ENCODE measurements at regions of chr1 and their contacts with region 1.

Region 1: DNA sequence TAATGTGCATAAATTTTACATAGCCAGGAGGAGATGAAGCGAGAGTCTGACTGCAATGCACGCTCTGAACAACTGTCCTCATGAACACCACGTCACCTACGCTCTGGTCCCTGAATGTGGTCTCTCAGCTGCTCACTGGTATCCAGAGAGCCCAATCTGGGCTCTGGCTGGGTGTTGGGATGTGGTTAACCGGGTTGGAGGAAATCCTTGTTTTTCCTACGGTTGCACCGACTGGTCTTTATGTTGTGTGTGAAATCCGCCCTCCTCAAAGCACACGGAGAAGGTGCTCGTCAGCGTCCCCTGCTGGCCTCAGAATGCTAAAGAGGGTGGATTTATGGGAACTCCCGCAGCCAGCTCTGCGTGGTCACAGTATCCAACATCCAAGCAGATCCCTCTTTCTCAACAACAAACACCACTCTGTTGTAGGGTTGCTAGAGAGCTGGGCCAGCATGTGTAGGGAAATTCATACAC is 51.8 kb upstream of the FAM89A start:
- DNase-seq: peak; percentile 61
- H3K4me3 ChIP-seq: no peak overlapping the region
- H3K27ac ChIP-seq: no peak overlapping the region
- H3K4me1 ChIP-seq: no peaks in the 10 kb centered on the region
- H3K27me3 ChIP-seq: peaks cover 7 to 13% of the 10 kb centered on the region in 2 experiments
- CTCF ChIP-seq: peak; percentile 71 to 73
- POLR2A ChIP-seq: no peak

Region 2: GRCh38 chr1:230642263-230642959 is 449.5 kb before region 1 on chr1 and contains the start of gene COG2:
- CTCF ChIA-PET with region 1: no interaction called
- POLR2A ChIA-PET with region 1: no interaction called
- dilution Hi-C with region 1: no loop called
- intact Hi-C with region 1: loop called (anchors 5 kb)
- DNase-seq: peak; percentile 94
- H3K4me3 ChIP-seq: peak within 1 kb of the TSS; percentile 4 to 95 (median 47)
- H3K27ac ChIP-seq: no peak within 1 kb of the TSS
- H3K4me1 ChIP-seq: peaks cover 12% of the 10 kb centered on the region
- H3K27me3 ChIP-seq: peaks cover 6 to 8% of the 10 kb centered on the region in 2 experiments
- CTCF ChIP-seq: peak; percentile 100
- POLR2A ChIP-seq: peak; percentile 65
- total RNA-seq, gene COG2: 20.7 and 24.2 TPM in 2 replicates

Region 3: GRCh38 chr1:230917284-230918135 is 174.4 kb before region 1 on chr1:
- CTCF ChIA-PET with region 1: interaction called, 16 read pairs
- POLR2A ChIA-PET with region 1: no interaction called
- dilution Hi-C with region 1: no loop called
- intact Hi-C with region 1: loop called (anchors 1 kb)
- DNase-seq: peak; percentile 72
- H3K4me3 ChIP-seq: no peak overlapping the region
- H3K27ac ChIP-seq: no peak overlapping the region
- H3K4me1 ChIP-seq: no peaks in the 10 kb centered on the region
- H3K27me3 ChIP-seq: no peaks in the 10 kb centered on the region
- CTCF ChIP-seq: peak; percentile 73 to 77
- POLR2A ChIP-seq: no peak

Region 4: GRCh38 chr1:231020139-231020601 is 71.7 kb before region 1 on chr1:
- CTCF ChIA-PET with region 1: interaction called, 11 read pairs
- POLR2A ChIA-PET with region 1: no interaction called
- dilution Hi-C with region 1: no loop called
- intact Hi-C with region 1: loop called (anchors 2 kb)
- DNase-seq: no peak
- H3K4me3 ChIP-seq: no peak overlapping the region
- H3K27ac ChIP-seq: no peak overlapping the region
- H3K4me1 ChIP-seq: peaks cover 7% of the 10 kb centered on the region
- H3K27me3 ChIP-seq: no peaks in the 10 kb centered on the region
- CTCF ChIP-seq: no peak
- POLR2A ChIP-seq: no peak

Region 5: DNA sequence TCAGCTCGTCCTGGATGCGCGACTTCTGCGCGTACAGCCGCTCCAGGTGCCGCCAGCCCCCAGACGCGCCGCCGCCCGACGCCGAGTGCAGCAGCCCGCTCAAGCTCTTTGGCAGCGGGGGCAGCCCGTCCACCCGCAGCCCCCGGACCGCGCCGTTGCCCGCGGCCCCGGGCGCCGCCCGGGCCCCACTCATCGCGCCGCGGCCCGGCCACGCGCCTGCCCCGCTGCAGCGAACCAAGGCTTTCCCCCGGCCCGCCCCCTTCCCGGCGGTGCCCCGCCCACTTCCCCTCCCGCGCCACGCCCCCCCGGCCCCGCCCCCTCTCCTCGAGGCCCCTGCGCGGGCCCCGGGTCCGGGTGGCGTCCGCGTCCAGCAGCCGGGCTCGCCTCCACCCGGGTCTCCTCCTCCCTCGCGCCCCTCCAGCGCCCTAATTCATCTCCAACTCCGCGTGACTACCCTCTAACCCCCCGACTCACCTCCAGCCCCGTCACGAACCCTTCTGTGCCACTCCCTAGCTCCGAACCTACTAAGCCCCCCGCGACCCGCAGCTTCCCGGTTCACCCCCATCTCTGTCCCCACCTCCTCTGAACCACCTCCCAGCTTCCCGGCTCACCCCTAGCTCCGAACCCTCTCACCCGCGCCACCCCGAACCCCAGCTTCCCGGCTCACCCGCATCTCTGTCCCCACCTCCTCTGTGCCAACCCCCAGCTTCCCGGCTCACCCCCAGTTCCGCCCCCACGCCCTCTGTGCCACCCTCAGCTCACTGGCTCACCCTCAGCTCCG is 51.7 kb before region 1 on chr1 and contains the start of gene FAM89A:
- CTCF ChIA-PET with region 1: interaction called, 9 read pairs
- POLR2A ChIA-PET with region 1: no interaction called
- dilution Hi-C with region 1: no loop called
- intact Hi-C with region 1: loop called (anchors 2 kb)
- DNase-seq: no peak
- H3K4me3 ChIP-seq: peak within 1 kb of the TSS; percentile 64 to 84 (median 65)
- H3K27ac ChIP-seq: no peak within 1 kb of the TSS
- H3K4me1 ChIP-seq: peaks cover 16% of the 10 kb centered on the region
- H3K27me3 ChIP-seq: peaks cover 11 to 28% of the 10 kb centered on the region in 2 experiments
- CTCF ChIP-seq: no peak
- POLR2A ChIP-seq: no peak
- total RNA-seq, gene FAM89A: 13.6 and 24.0 TPM in 2 replicates

Region 6: GRCh38 chr1:231070758-231071444 is 21.0 kb before region 1 on chr1:
- CTCF ChIA-PET with region 1: interaction called, 18 read pairs
- POLR2A ChIA-PET with region 1: no interaction called
- dilution Hi-C with region 1: no loop called
- intact Hi-C with region 1: no loop called
- DNase-seq: peak; percentile 71
- H3K4me3 ChIP-seq: no peak overlapping the region
- H3K27ac ChIP-seq: peak overlapping the region; percentile 22
- H3K4me1 ChIP-seq: peaks cover 13% of the 10 kb centered on the region
- H3K27me3 ChIP-seq: peaks cover 0 to 4% of the 10 kb centered on the region in 2 experiments
- CTCF ChIP-seq: no peak
- POLR2A ChIP-seq: no peak

Region 7: GRCh38 chr1:231211005-231211857 is 119.4 kb after region 1 on chr1:
- CTCF ChIA-PET with region 1: interaction called, 31 read pairs
- POLR2A ChIA-PET with region 1: no interaction called
- dilution Hi-C with region 1: no loop called
- intact Hi-C with region 1: loop called (anchors 1 kb)
- DNase-seq: peak; percentile 76
- H3K4me3 ChIP-seq: peak overlapping the region; percentile 6 to 52 (median 37)
- H3K27ac ChIP-seq: no peak overlapping the region
- H3K4me1 ChIP-seq: peaks cover 2% of the 10 kb centered on the region
- H3K27me3 ChIP-seq: peaks cover 0 to 5% of the 10 kb centered on the region in 2 experiments
- CTCF ChIP-seq: peak; percentile 84 to 90
- POLR2A ChIP-seq: no peak

Region 8: DNA sequence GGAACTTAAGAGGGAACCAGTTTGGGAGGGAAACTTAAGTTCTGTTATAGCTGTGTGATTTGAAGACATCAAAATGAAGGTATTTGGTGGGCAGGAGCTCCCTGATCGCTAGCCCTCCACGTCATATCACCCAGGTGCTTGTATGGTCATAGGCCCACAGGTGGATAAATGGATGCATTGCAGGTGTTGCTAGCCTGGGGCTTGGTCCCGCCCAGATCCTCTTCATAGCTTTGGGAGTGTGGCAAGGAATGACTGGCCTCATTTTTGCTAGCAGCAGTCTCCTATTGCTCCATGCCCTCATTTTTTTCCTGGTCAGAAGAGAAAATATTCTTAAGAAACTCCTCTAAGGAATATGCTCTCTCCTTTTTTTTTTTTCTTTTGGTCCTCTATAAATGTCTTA is 160.5 kb after region 1 on chr1:
- CTCF ChIA-PET with region 1: no interaction called
- POLR2A ChIA-PET with region 1: no interaction called
- dilution Hi-C with region 1: no loop called
- intact Hi-C with region 1: no loop called
- DNase-seq: no peak
- H3K4me3 ChIP-seq: no peak overlapping the region
- H3K27ac ChIP-seq: no peak overlapping the region
- H3K4me1 ChIP-seq: no peaks in the 10 kb centered on the region
- H3K27me3 ChIP-seq: no peaks in the 10 kb centered on the region
- CTCF ChIP-seq: no peak
- POLR2A ChIP-seq: no peak

Measured in endothelial cell of umbilical vein (primary cell).